Gastrocnemius medialis (tissue), 4 donors: ENCODE measurements at regions of chr22 and their contacts with region 1.

Region 1: DNA sequence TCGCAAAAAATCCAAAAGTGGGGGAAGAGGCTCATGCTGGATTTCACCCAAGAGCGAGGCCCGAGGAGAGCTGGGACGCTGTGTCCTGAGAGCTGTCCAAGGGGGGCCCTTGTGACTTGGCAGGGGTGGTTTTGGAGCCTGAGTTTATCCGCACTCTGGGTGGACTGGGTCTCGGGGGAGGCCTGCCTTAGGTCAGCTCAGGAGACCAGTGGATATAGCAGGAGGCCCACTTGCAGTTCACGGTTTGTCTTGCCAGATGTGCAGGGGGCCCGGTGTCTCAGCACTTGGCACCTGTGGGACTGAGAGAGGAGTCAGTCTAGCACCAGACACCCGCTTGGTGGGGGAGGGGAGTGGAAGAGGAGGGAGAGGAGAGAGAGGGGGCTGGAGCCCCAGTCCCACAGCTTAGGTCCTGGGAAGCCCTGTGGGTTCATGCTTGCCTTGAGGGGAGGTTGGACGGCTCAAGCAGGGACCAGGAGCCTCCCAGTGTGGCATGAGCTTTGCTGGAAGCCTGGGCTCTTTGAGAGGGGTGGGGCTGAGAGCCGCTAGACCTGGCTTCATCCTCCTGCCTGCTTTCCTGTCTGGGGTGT is 33.4 kb downstream of the PARVB start:
- DNase-seq: peak; percentile 84 to 91
- ATAC-seq: peak; percentile 88 to 91
- H3K4me3 ChIP-seq: peak overlapping the region; percentile 14 to 36 (median 18)
- H3K27ac ChIP-seq: peak overlapping the region; percentile 87 to 91 (median 89)
- H3K4me1 ChIP-seq: peaks cover 33 to 44% of the 10 kb centered on the region in 2 donors
- H3K27me3 ChIP-seq: no peaks in the 10 kb centered on the region
- CTCF ChIP-seq: no peak
- POLR2A ChIP-seq: peak; percentile 38 to 48

Region 2: GRCh38 chr22:43998679-43999264 is 58.7 kb before region 1 on chr22:
- in situ Hi-C with region 1: no loop called
- intact Hi-C with region 1: loop called (anchors 2 kb)
- DNase-seq: peak; percentile 89 to 92
- ATAC-seq: peak; percentile 94
- H3K4me3 ChIP-seq: peak overlapping the region in 2 of 4 donors; percentile 16 to 41
- H3K27ac ChIP-seq: peak overlapping the region; percentile 82 to 95 (median 84)
- H3K4me1 ChIP-seq: peaks cover 25 to 36% of the 10 kb centered on the region in 2 donors
- H3K27me3 ChIP-seq: no peaks in the 10 kb centered on the region
- CTCF ChIP-seq: no peak
- POLR2A ChIP-seq: peak; percentile 48 to 55

Region 3: DNA sequence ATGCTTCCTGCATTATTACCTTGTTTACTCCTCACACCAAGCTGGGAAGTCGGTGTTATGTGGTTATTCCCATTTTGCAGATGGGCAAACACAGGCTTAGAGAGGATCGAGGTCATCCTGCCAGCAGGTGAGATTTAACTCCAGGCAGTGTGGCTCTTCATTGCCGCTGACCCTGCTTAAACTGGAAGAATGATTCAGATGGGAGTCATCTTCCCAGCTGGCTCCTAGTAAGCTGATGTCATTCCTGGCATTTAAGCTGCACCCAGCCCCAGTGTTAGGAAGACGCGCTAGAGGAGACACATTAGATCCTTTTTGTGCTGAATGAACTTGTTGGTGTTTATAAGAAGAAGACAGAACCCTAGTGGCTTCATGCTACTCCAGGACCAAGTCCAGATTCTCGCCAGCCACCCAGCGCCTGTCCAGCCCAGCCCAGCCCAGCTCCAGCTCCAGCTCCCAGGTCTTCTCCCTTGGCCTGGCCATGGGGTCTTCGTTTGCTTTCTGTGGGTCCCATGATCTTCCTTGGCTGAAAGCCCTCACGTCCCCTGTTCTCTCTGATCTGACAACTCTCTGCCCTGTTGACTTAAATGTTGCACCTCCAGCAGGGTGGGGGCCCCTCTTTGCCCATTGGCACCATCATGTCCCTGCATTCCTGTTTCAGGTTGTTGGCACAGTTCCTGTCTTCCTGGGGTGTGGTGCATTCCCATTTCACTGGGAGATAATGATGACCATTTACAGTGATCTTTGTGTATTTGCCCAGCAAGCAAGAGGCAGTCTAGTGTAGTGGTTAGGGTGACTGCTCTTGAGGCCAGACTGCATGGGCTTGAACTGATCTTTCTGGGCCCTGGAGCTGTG is 19.7 kb before region 1 on chr22:
- in situ Hi-C with region 1: no loop called
- intact Hi-C with region 1: loop called (anchors 2 kb)
- DNase-seq: peak; percentile 85 to 92
- ATAC-seq: peak; percentile 95 to 96
- H3K4me3 ChIP-seq: peak overlapping the region in 2 of 4 donors; percentile 12 to 17
- H3K27ac ChIP-seq: peak overlapping the region; percentile 94 to 98 (median 97)
- H3K4me1 ChIP-seq: peaks cover 47 to 57% of the 10 kb centered on the region in 2 donors
- H3K27me3 ChIP-seq: no peaks in the 10 kb centered on the region
- CTCF ChIP-seq: no peak
- POLR2A ChIP-seq: peak; percentile 36 to 70

Region 4: DNA sequence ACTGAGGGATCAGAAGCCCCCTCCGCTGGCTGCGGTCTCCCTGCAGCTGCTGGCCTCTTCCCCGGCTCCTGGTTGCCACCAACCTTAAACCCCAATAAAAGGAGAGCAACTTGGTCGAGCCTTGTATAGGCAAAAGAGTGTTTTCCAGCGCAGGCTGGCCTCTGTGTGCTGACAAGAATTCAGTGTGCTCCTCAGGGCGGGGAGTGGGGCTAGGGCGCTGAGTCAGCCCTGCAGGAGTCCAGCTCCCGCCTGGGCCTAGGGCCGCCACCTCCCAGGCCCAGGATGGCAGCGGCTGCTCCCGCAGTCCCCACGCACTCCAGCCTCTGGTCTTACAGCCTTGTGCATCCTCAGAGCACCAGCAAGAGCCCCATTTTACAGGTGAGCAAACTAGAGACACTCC is 255.3 kb after region 1 on chr22 and contains the start of gene SHISAL1:
- in situ Hi-C with region 1: no loop called
- intact Hi-C with region 1: no loop called
- DNase-seq: no peak
- ATAC-seq: no peak
- H3K4me3 ChIP-seq: no peak within 1 kb of the TSS
- H3K27ac ChIP-seq: no peak within 1 kb of the TSS
- H3K4me1 ChIP-seq: no peaks in the 10 kb centered on the region
- H3K27me3 ChIP-seq: peaks cover 0 to 4% (median 0%) of the 10 kb centered on the region in 3 donors
- CTCF ChIP-seq: no peak
- POLR2A ChIP-seq: no peak
- total RNA-seq, gene SHISAL1: 0.03 to 0.10 TPM in 2 of 4 donors, not detected in the others